MCF 10A (cell line): ENCODE measurements at regions of chr9 and their contacts with region 1.

Region 1: DNA sequence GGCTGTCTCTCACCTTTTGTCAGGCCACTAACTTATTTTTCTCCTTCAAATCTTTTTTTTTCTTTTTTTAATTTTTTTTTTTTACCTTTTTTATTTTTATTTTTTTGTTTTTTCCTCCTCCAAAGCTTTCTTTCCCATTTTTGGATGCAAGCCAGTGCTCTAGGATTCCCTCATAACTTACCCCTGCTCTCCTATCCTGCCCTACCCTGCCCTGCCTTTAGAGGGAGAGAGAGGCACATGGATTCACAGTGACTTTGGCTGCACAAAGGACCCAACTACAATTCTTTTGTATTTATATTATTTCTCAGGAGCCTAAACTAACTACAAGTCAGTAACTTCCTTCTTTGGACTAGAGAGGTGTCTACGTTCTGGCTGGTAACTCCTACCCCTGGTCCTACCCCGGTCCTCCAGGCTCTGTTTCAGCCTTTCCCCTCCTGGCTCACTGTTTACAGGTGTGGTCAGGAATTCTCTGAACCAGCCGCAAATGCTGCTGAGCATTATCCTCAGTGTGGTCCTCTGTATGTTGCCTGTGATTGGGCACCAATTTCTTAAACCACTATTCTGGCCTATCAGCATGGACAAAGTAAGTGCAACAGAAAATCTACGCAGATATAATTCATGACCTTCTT is 8.4 kb upstream of the RUSC2 start:
- DNase-seq: peak; percentile 85
- H3K4me3 Mint-ChIP-seq: no peak overlapping the region
- H3K27ac Mint-ChIP-seq: no peak overlapping the region
- H3K4me1 Mint-ChIP-seq: peaks cover 10% of the 10 kb centered on the region
- H3K27me3 Mint-ChIP-seq: no peaks in the 10 kb centered on the region
- CTCF ChIP-seq: peak; percentile 84

Region 2: GRCh38 chr9:35096035-35096849 is 385.2 kb before region 1 on chr9 and contains the start of gene PIGO:
- CTCF ChIA-PET with region 1: interaction called, 5 read pairs
- POLR2A ChIA-PET with region 1: no interaction called
- intact Hi-C with region 1: loop called (anchors 1 kb)
- DNase-seq: peak; percentile 85
- H3K4me3 Mint-ChIP-seq: peak within 1 kb of the TSS; percentile 85
- H3K27ac Mint-ChIP-seq: peak within 1 kb of the TSS; percentile 95
- H3K4me1 Mint-ChIP-seq: peaks cover 15% of the 10 kb centered on the region
- H3K27me3 Mint-ChIP-seq: no peaks in the 10 kb centered on the region
- CTCF ChIP-seq: peak; percentile 49
- total RNA-seq, gene PIGO: 34.8 and 39.2 TPM in 2 replicates

Region 3: DNA sequence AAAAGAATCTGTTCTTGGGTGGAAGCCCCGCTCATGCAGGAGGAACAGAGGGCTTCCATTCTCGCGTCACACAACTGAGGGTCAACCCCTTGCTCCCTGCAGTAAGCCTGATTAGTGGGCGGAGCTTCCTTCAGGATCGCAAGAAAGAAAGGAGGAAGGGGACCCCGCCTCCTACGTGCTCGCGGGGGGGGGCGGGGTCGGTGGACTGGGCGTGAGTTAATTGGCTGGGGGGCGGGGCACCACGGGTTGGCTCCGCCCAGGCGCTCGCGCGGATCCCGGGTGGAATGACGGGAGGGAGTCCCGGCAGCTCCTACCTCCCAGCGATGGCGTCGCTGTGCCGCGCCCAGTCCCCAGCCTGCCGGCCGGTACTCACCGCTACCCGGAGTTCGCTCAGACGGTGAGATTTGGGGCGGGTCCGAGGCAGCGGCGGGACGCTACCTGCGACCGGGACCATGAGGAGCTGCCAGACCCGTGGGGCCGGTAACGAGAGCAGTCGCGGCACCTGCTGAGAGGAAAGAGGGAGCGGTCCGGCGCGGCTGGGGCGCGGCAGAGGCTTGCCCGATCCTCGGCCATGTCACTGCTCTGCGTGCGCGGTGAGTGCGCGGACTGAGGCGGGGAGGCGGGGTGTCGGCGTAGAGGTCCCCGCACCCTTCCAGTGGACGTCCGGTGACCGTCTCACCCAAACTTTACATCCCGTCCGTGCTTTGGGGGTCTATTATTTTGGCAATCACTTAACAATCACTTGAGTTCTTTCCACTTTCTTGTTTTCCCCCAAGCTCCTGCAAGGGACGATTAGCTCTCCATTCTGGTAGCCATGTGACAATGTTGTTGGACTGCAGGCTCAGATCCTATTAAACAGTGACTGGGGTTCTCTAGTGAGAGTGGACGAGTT is 319.5 kb before region 1 on chr9 and contains the start of gene UNC13B:
- CTCF ChIA-PET with region 1: interaction called, 5 read pairs
- POLR2A ChIA-PET with region 1: no interaction called
- intact Hi-C with region 1: loop called (anchors 5 kb)
- DNase-seq: peak; percentile 94
- H3K4me3 Mint-ChIP-seq: peak within 1 kb of the TSS; percentile 91
- H3K27ac Mint-ChIP-seq: peak within 1 kb of the TSS; percentile 94
- H3K4me1 Mint-ChIP-seq: peaks cover 18% of the 10 kb centered on the region
- H3K27me3 Mint-ChIP-seq: no peaks in the 10 kb centered on the region
- CTCF ChIP-seq: no peak
- total RNA-seq, gene UNC13B: 20.6 and 22.9 TPM in 2 replicates

Region 4: DNA sequence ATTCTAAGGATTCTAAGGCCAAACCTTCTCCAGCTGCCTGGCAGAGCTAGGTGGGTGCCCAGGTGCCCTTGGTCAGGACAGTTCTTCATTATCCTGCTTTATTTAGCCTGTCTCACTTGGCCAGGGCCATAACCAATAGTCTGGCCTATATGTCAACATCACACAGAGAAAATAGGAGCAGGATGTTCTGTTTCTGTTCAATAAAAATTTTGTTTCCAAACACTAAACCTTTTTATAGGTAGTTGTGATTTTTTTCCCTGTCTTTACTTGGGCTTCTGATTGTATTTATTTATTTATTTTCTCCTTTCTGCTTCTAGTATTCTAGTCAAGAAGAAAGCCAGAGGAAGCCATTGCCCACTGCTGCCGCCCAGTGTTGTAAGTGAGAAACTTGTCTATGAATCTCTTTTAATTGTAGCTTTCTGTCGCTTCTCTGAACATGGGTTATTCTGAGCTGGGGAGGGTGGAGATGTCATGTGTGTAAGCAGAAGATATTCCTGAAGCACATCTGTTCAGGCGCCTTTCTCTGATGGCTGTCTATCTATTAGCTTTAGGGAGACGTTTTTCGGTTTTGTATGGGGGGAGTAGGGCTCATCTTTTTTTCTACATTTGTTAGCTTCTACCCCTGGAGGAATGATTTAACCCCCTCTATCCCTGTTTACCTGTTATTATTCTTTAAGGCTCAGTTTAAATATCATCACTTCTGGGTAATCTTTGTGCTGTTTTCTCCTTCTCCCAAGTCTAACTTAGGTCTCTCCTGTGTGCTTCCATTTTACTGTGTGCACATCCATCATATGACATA is 222.6 kb before region 1 on chr9:
- CTCF ChIA-PET with region 1: interaction called, 23 read pairs
- POLR2A ChIA-PET with region 1: no interaction called
- intact Hi-C with region 1: loop called (anchors 1 kb)
- DNase-seq: peak; percentile 81
- H3K4me3 Mint-ChIP-seq: no peak overlapping the region
- H3K27ac Mint-ChIP-seq: no peak overlapping the region
- H3K4me1 Mint-ChIP-seq: peaks cover 8% of the 10 kb centered on the region
- H3K27me3 Mint-ChIP-seq: no peaks in the 10 kb centered on the region
- CTCF ChIP-seq: peak; percentile 71

Region 5: DNA sequence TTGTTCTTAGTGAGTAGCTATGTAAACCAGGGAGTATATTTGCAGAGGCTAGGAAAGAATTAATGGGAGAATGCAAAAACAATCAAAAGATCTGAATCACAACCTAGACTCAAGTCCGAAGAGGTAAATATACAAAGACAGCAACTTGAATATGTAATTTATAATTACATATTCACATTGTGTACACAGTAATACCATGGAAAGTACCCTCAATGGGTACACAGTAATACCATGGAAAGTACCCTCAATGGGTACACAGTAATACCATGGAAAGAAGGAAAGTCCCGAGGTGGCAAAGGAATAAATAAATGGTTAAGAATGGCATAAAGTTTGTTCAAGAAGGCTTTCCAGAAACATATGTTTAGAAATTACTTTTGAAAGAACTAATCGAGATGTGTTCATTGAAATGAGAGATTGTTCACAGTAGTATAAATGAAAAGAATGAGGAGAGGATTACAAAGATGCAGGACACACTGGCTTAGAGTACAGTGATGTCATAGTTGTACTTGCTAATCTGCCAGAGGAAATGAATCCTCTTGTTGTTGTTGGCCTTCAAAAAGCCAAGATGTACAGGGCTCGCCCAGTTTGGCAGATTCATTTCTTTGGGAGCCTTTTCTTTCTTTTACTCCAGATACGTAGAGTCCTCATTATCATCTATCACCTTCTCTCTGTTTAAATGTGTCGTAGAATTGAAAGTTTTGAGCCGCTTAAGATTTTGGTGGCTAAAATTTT is 203.7 kb before region 1 on chr9:
- CTCF ChIA-PET with region 1: interaction called, 6 read pairs
- POLR2A ChIA-PET with region 1: no interaction called
- intact Hi-C with region 1: loop called (anchors 5 kb)
- DNase-seq: peak; percentile 76
- H3K4me3 Mint-ChIP-seq: peak overlapping the region; percentile 49
- H3K27ac Mint-ChIP-seq: peak overlapping the region; percentile 85
- H3K4me1 Mint-ChIP-seq: peaks cover 42% of the 10 kb centered on the region
- H3K27me3 Mint-ChIP-seq: no peaks in the 10 kb centered on the region
- CTCF ChIP-seq: no peak

Region 6: DNA sequence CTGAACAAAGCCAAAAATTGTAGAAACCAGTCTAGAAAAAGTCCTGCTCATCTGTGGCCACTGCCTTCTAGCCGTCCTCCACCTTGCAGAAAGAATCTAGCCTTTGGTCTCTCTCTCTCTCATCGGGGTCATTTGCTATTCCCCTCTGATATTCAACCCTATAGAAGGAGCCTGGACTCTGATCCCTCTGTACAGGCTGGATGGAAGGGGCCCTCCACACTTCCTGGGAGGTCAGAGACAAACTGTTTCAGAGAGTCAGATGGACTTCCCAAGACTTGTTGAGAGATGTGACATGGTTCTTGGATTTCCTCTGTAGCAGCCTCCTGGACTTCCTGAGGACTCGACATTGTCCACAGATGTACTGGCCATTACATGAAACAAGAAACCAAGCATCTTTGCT is 76.6 kb before region 1 on chr9:
- CTCF ChIA-PET with region 1: no interaction called
- POLR2A ChIA-PET with region 1: no interaction called
- intact Hi-C with region 1: no loop called
- DNase-seq: no peak
- H3K4me3 Mint-ChIP-seq: no peak overlapping the region
- H3K27ac Mint-ChIP-seq: no peak overlapping the region
- H3K4me1 Mint-ChIP-seq: no peaks in the 10 kb centered on the region
- H3K27me3 Mint-ChIP-seq: no peaks in the 10 kb centered on the region
- CTCF ChIP-seq: no peak